Vagina (tissue), 2 donors: ENCODE measurements at regions of chr3 and their contacts with region 1.

Region 1: DNA sequence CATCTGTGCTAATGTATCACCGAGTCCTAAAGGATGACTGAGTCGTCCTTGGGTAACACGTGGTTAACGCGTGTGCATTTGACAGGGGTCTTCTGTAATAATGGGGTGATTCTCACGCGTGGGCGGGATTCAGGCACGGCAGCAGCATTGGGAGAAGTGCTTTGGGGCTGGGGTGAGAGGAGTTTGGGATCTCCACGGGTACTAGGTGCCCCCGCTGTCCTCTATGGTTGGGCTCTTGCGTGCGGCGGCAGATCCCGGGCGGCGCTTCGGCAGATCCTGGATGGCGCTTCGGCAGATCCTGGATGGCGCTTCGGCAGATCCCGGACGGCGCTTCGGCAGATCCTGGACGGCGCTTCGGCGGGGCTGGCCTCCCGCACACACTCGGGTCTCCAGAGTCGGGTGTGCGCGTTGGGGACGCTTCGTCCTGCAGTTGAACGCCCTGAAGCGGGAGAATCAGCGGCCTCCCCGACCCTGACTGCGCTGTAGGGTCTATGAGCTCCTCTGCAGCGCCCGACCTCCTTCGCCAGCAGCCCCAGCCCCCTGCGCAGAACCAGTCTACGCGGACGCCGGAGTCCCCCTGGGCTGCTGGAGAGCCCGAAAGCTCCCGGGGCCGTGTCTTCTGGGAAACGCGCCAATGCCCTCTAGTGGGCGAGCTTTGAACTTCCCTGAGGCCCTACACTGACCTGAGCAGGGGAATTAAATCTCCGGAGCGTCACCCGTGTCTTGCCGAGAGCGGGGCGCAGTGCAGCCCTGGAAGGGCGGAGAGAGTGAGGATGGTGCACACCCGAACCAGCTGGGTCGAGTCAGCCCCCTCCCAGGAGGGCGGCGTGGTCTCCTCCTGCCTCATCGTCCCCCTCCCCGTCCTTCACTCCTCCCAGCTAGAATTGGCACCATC is 48.1 kb upstream of the EPHB3 start:
- DNase-seq: peak in 1 of 2 donors; percentile 82
- H3K4me3 ChIP-seq: peak overlapping the region; percentile 44 to 45
- H3K27ac ChIP-seq: peak overlapping the region; percentile 40
- H3K4me1 ChIP-seq: peaks cover 14% of the 10 kb centered on the region
- H3K27me3 ChIP-seq: no peaks in the 10 kb centered on the region
- CTCF ChIP-seq: peak; percentile 68 to 80 (median 80)
- POLR2A ChIP-seq: no peak

Region 2: DNA sequence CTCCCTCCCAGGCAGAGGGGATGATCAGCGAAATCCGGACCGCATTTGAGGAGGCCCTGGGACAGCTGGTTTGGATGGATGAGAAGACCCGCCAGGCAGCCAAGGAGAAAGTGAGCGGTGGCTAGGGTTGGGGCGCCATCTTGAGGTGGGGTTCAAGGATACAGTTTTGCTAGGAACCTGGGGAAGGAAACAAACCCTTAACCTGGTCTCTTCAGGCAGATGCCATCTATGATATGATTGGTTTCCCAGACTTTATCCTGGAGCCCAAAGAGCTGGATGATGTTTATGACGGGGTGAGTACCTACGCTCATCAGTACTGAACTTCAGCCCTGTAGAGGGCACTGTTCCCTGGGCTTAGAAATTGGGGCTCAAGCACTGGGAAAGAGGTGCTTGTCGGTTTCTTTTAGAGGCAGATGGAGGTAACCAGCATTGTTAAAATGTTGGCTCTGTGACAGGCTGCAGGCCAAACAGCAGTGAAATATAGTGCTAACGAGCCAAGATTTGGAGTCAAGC is 224.0 kb before region 1 on chr3:
- intact Hi-C with region 1: loop called (anchors 10 kb)
- DNase-seq: no peak
- H3K4me3 ChIP-seq: no peak overlapping the region
- H3K27ac ChIP-seq: no peak overlapping the region
- H3K4me1 ChIP-seq: no peaks in the 10 kb centered on the region
- H3K27me3 ChIP-seq: no peaks in the 10 kb centered on the region
- CTCF ChIP-seq: peak in 1 of 3 experiments; percentile 23
- POLR2A ChIP-seq: no peak

Region 3: DNA sequence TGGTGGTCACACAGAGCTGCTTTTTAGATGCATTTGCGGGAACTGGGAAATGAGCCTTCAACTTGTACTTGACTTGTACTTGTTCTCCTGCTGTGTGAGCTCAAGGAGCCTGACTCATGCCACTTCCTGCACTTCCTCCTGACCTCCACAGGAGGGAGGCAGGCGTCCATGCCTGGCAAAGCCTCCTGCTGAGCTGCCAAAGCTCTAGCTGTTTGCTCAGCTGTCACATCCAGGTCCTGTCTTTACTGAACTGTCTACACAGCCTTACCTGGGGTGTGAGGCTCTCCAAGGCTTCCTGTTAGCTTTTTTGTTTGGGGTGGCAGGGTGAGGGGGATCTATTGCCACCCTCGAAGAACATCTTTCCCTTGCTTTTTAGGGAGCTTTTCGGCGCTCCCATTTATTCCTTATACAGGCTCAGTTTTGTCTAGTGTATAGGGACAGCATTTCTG is 141.9 kb before region 1 on chr3:
- intact Hi-C with region 1: loop called (anchors 10 kb)
- DNase-seq: no peak
- H3K4me3 ChIP-seq: no peak overlapping the region
- H3K27ac ChIP-seq: peak overlapping the region; percentile 67
- H3K4me1 ChIP-seq: peaks cover 33% of the 10 kb centered on the region
- H3K27me3 ChIP-seq: no peaks in the 10 kb centered on the region
- CTCF ChIP-seq: peak; percentile 81 to 89 (median 84)
- POLR2A ChIP-seq: no peak

Region 4: GRCh38 chr3:184561061-184561912 is 47.8 kb after region 1 on chr3 and contains the start of gene EPHB3:
- intact Hi-C with region 1: no loop called
- DNase-seq: peak in 1 of 2 donors; percentile 99
- H3K4me3 ChIP-seq: peak within 1 kb of the TSS; percentile 72 to 75
- H3K27ac ChIP-seq: peak within 1 kb of the TSS; percentile 87
- H3K4me1 ChIP-seq: peaks cover 36% of the 10 kb centered on the region
- H3K27me3 ChIP-seq: no peaks in the 10 kb centered on the region
- CTCF ChIP-seq: peak; percentile 99 to 100 (median 99)
- POLR2A ChIP-seq: peak; percentile 62 to 94
- total RNA-seq, gene EPHB3: 17.7 TPM